Breast epithelium (tissue), 4 donors: ENCODE measurements at regions of chr19 and their contacts with region 1.

Region 1: DNA sequence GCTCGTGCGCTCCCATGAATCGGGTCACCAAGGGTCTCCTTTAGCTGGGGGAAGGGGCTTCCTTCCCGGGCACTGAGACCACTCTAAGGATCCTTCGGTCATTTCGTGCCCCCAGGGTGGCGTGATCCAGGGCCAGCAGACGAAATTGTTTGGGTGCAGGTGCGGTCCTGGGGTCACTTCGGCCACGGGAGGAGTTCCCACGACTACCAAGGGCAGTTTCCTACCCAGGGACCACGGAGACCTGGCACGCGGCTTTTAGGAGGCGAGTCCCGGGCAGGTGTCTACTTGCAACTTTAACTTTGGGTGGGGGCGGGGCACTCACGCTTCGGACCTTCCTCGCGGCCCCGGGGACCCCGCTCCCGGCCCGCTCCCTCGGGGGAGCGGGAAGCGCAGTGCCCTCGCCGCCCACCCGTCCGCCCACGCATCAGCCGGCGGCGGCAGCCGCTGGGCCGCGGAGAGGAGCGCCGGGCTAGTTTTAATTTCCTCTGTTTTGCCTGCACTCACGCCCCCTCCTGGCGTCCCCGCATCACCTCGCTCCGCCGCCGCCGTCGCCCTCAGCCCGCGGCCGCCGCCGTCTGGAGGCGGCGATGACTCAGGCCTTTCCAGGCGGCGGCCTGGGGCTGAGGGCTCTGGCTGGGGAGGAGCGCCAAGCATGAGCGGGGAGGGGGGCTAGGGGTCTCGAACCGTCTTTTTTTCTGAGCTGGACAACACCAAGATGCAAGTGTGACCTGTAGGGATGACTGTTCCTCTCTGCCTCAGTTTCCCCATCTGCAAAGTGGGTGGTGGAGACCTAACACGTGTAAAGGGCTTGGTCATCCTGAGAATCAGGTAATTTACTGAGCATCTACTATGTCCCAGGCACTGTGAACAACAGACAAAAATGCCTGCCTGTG is 21.8 kb downstream of the OLFM2 start:
- DNase-seq: peak; percentile 58 to 67
- H3K4me3 ChIP-seq: peak overlapping the region; percentile 44 to 87 (median 65)
- H3K27ac ChIP-seq: no peak overlapping the region
- H3K4me1 ChIP-seq: no peaks in the 10 kb centered on the region
- H3K27me3 ChIP-seq: peaks cover 0 to 2% of the 10 kb centered on the region in 2 donors
- CTCF ChIP-seq: peak in 2 of 3 donors; percentile 23 to 40
- POLR2A ChIP-seq: no peak

Region 2: DNA sequence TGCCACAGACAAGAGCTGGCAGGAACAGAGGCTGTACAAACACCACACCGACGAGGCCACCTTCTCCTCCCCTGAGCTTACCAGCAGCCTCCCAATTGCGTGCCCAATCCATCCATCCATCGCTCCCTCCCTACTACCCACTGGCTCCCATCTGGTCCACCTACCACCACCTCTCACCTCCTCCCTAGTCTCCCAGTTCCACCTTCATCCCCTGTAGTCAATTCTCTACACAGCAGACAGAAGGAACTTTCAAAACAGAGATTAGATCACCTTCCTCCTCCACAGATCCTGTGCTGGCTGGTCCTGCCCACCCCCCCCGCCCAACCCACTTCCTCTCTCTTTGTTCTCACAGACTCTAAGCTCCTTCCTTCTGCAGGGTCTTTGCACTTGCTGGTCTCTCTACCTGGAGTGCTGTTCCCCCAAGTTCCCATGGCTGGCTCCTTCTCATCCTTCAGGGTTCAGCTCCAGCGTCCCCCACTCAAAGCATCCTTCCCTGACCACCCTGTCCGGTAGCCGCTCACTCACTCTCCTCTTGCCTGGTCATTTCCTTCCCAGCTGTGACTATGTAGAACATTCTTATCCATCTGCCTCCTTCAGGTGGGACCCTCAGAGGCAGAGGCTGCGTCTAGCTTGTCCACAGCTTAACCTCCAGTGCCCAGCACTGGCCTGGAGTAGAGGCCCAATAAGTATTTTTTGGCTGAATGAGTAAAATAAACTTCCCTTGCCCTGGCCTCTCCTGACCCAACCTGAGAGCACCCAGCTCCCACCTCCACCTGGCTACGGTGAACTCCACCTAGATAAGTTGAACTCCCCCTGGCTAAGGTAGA is 56.4 kb before region 1 on chr19:
- intact Hi-C with region 1: no loop called
- DNase-seq: no peak
- H3K4me3 ChIP-seq: no peak overlapping the region
- H3K27ac ChIP-seq: no peak overlapping the region
- H3K4me1 ChIP-seq: no peaks in the 10 kb centered on the region
- H3K27me3 ChIP-seq: no peaks in the 10 kb centered on the region
- CTCF ChIP-seq: no peak
- POLR2A ChIP-seq: no peak

Region 3: GRCh38 chr19:9903336-9903735 is 11.2 kb before region 1 on chr19:
- intact Hi-C with region 1: no loop called
- DNase-seq: no peak
- H3K4me3 ChIP-seq: no peak overlapping the region
- H3K27ac ChIP-seq: no peak overlapping the region
- H3K4me1 ChIP-seq: no peaks in the 10 kb centered on the region
- H3K27me3 ChIP-seq: no peaks in the 10 kb centered on the region
- CTCF ChIP-seq: no peak
- POLR2A ChIP-seq: no peak

Region 4: DNA sequence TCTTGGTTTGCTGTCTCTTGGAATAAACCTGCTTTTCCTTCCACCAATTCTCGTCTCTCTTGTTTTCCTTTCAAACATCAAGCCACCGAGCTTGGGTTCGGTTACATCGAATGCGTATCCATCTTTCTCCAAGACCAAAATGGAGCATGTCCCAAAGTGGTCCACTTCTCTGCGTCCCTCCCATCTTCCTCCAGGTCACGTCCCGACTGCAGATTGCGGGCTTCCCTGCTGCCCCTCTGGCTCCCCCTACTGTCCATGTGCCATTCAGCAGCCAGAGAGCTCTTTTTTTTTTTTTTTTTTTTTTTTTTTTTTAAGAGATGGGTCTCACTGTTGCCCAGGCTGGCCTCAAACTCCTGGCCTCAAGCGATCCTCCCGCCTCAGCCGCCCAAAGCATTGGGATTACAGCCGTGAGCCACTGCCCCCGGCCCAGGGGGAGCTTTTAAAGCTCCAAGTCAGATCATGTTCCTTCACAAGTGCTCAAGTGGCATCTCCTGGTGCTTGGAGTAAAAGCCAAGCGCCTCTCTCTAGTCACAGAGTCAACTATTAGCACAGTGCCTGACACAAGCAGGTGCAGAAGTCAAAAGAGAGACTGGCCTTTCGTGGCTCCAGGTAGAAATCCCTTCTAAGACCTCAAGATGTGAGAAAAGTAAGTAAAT is 85.7 kb after region 1 on chr19:
- intact Hi-C with region 1: loop called (anchors 5 kb)
- DNase-seq: peak in 1 of 2 donors; percentile 30
- H3K4me3 ChIP-seq: no peak overlapping the region
- H3K27ac ChIP-seq: no peak overlapping the region
- H3K4me1 ChIP-seq: no peaks in the 10 kb centered on the region
- H3K27me3 ChIP-seq: no peaks in the 10 kb centered on the region
- CTCF ChIP-seq: peak in 2 of 3 donors; percentile 46 to 48
- POLR2A ChIP-seq: no peak